Dendritic cell treated with granulocyte-macrophage colony-stimulating factor and Interleukin-4, amounts not matched to agents 40 ng/mL and 50 ng/mL, for 4 days (primary cell): ENCODE measurements at regions of chr6 and their contacts with region 1.

Region 1: GRCh38 chr6:53484476-53485280 is 60.2 kb downstream of the GCLC start:
- H3K4me3 Mint-ChIP-seq: no peak overlapping the region
- H3K27ac Mint-ChIP-seq: no peak overlapping the region
- H3K4me1 Mint-ChIP-seq: peaks cover 15% of the 10 kb centered on the region
- H3K27me3 Mint-ChIP-seq: peaks cover 15% of the 10 kb centered on the region

Region 2: GRCh38 chr6:52839119-52840055 is 645.3 kb before region 1 on chr6:
- intact Hi-C with region 1: loop called (anchors 10 kb)
- H3K4me3 Mint-ChIP-seq: no peak overlapping the region
- H3K27ac Mint-ChIP-seq: no peak overlapping the region
- H3K4me1 Mint-ChIP-seq: no peaks in the 10 kb centered on the region
- H3K27me3 Mint-ChIP-seq: peaks cover 8% of the 10 kb centered on the region

Region 3: DNA sequence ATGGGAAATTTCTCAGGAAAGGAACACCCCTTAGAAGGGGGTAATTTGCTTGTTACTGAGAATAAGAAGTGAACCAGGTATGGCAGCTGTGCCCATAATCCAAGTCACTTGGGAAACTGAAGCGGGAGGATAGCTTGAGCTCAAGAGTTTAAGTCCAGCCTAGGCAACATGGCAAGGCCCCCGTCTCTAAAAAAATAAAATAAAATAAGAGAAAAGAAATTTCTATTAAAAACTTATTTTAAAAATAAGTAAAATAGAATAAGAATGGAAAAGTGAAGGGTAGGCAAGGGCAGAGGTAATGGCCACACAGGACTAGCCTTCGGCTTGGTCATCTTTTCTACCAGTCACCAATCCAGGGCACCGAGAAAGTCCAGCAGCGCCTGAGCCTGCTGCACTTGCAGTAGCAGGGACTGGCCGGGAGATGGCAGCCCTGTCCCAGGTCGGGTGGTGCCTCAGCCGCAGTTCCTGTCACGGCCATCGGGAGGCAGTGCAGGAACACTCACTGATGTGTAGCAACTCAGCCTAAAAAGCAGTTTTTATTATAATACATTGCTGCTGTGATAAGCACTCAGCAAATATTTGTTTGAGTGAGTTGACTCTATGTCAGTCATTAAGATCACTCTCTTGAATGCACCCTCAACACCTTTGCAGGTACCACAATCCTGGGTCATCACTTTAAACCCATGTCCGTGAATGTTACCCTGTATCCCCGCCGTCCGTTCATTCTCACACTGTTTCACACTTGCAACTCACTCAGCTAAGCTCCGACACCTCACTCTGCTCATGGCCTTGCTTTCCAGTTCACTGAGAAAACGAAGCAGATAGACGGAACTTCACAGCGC is 312.9 kb before region 1 on chr6:
- intact Hi-C with region 1: loop called (anchors 1 kb)
- H3K4me3 Mint-ChIP-seq: no peak overlapping the region
- H3K27ac Mint-ChIP-seq: no peak overlapping the region
- H3K4me1 Mint-ChIP-seq: peaks cover 15% of the 10 kb centered on the region
- H3K27me3 Mint-ChIP-seq: peaks cover 2% of the 10 kb centered on the region

Region 4: GRCh38 chr6:53281518-53282215 is 203.0 kb before region 1 on chr6:
- intact Hi-C with region 1: no loop called
- H3K4me3 Mint-ChIP-seq: no peak overlapping the region
- H3K27ac Mint-ChIP-seq: no peak overlapping the region
- H3K4me1 Mint-ChIP-seq: peaks cover 46% of the 10 kb centered on the region
- H3K27me3 Mint-ChIP-seq: no peaks in the 10 kb centered on the region

Region 5: DNA sequence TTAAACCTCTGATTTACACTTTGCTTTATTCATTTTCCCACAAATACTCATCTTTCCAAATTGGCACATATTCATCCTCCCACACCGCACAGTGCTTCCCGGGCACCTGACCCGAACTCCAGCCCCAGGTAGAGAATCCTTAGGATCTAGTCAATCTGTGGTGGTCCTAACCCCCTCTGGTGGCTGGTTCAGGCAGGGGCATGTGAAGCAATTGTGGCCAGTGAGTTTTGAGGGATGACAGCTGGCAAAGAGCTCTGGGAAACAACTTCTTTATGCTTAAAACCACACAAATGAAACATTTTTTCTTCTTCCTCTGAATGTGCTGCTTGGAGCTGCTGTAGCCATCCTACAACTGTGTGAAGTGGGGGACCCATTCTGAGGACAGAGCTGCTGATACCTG is 190.6 kb before region 1 on chr6:
- intact Hi-C with region 1: loop called (anchors 10 kb)
- H3K4me3 Mint-ChIP-seq: no peak overlapping the region
- H3K27ac Mint-ChIP-seq: no peak overlapping the region
- H3K4me1 Mint-ChIP-seq: peaks cover 26% of the 10 kb centered on the region
- H3K27me3 Mint-ChIP-seq: no peaks in the 10 kb centered on the region

Region 6: GRCh38 chr6:53342217-53342616 is 142.5 kb before region 1 on chr6:
- intact Hi-C with region 1: loop called (anchors 5 kb)
- H3K4me3 Mint-ChIP-seq: no peak overlapping the region
- H3K27ac Mint-ChIP-seq: no peak overlapping the region
- H3K4me1 Mint-ChIP-seq: peaks cover 67% of the 10 kb centered on the region
- H3K27me3 Mint-ChIP-seq: no peaks in the 10 kb centered on the region

Region 7: GRCh38 chr6:53437557-53438202 is 47.0 kb before region 1 on chr6:
- intact Hi-C with region 1: loop called (anchors 5 kb)
- H3K4me3 Mint-ChIP-seq: no peak overlapping the region
- H3K27ac Mint-ChIP-seq: no peak overlapping the region
- H3K4me1 Mint-ChIP-seq: peaks cover 30% of the 10 kb centered on the region
- H3K27me3 Mint-ChIP-seq: no peaks in the 10 kb centered on the region